ENCODE measurements at regions of chr1 and their contacts with region 1.

Region 1: DNA sequence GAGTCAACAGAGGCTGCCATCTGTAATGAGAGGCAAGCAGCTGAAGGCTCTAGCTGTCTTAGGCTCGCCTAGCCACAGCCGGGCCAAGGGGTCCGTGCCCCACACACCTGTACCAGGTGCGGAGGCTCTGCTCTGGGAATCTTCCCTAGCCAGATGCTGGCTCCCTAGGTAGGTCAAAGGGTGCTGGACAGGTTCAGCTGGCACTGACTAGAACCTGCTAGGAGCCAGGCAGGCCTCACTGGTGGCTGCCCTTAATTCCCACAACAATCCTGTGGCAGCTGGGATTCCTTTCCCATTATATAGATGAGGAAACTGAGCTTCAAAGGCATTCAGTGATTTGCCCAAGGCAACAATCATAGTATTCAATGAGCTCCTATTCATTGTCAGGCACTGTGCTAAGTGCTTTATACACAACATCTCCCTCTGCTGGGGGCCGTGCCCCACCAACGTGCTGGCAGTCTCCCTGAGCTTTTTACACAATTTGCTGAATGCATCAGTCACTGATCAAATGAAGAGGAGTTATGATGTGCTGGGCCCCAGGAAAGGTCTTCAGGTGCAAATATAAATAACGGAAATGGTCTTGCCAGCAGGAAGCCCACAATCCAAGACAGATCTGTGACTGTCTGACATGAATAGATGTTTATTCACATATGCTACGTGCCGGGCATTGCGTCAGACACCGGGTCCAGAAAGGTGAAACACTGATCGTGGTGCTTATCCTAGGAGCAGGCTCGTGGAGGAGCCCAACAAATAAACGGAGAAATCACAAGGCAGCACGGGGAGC is 58.0 kb downstream of the DDX20 start:
- ATAC-seq: peak in 2 of 8 experiments; percentile 41 to 46
- H3K4me3 ChIP-seq: no peak overlapping the region
- H3K27ac ChIP-seq: no peak overlapping the region
- H3K4me1 ChIP-seq: peaks cover 0 to 5% of the 10 kb centered on the region in 2 donors

Region 2: GRCh38 chr1:111719674-111720132 is 94.0 kb before region 1 on chr1:
- in situ Hi-C with region 1: no loop called
- ATAC-seq: no peak
- H3K4me3 ChIP-seq: no peak overlapping the region
- H3K27ac ChIP-seq: no peak overlapping the region
- H3K4me1 ChIP-seq: peaks cover 0 to 2% of the 10 kb centered on the region in 2 donors

Region 3: GRCh38 chr1:111920221-111921024 is 106.7 kb after region 1 on chr1:
- in situ Hi-C with region 1: loop called in 1 of 9 experiments (anchors 25 kb)
- ATAC-seq: peak; percentile 85 to 93 (median 92)
- H3K4me3 ChIP-seq: no peak overlapping the region
- H3K27ac ChIP-seq: peak overlapping the region in 1 of 2 donors; percentile 68
- H3K4me1 ChIP-seq: peaks cover 21 to 36% of the 10 kb centered on the region in 2 donors

Measured in motor neuron (in vitro differentiated cells).